ENCODE measurements at regions of chrX and their contacts with region 1.

Region 1: DNA sequence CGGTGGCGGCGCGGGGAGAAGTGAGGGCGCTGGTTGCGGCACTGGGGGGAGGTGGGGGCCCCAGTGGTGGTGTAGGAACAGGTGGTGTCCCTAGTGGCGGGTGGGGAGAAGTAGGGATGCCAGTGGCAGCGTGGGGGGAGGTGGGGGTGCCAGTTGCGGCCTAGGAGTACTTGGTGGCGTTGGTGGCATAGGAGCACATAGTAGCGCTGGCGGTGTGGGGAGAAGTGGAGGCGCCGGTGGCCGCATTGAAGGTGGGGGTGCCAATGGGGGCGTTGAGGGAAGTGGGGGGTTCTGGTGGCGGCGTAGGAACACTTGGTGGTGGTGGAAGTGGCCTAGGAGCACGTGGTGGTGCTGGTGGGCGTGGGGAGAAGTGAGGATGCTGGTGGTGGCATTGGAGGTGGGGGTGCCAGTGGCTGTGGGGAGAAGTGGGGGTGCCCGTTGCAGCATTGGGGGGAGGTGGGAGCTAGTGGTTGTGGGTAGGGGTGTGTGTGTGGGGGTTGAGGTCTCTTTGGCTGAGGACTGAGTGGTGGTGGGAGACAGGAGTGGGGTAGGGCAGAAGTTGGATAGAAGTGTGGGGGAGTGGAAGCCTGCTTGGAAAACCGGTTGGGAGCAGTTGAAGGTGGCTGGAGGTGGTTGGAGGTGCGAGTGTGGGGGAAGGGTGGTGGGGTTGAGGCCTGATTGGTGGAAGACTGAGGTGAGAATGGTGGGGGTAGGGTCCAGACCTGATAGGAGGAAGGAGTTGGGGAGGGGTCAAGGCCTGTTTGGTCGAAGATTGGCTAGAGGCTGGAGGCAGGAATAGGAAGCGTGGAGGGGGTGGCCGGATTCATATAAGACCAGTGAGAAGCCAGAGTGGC is 1.1 kb downstream of the GCNA start:
- DNase-seq: no peak
- H3K4me3 ChIP-seq: no peak overlapping the region
- H3K27me3 ChIP-seq: no peaks in the 10 kb centered on the region
- CTCF ChIP-seq: no peak

Region 2: DNA sequence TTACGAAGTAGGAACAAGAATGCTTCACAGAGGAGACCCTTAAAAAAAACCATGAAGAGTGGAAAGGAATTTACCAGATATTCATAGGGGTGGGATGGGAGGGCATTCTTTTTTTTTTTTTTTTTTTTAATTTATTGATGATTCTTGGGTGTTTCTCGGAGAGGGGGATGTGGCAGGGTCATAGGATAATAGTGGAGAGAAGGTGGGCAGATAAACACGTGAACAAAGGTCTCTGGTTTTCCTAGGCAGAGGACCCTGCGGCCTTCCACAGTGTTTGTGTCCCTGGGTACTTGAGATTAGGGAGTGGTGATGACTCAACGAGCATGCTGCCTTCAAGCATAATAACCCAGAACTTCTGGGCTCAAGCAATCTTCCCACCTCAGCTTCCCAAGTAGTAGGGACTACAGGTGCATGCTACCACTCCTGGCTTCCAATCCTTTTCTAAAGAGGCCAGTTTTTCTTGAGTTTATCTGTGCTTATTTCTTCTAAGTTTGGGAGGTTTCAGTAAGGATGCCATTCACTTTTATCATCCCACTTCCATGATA is 112.3 kb before region 1 on chrX:
- CTCF ChIA-PET with region 1: no interaction called
- POLR2A ChIA-PET with region 1: no interaction called
- DNase-seq: no peak
- H3K4me3 ChIP-seq: no peak overlapping the region
- H3K27me3 ChIP-seq: no peaks in the 10 kb centered on the region
- CTCF ChIP-seq: no peak

Region 3: GRCh38 chrX:71482228-71482958 is 97.0 kb before region 1 on chrX:
- CTCF ChIA-PET with region 1: no interaction called
- POLR2A ChIA-PET with region 1: no interaction called
- DNase-seq: no peak
- H3K4me3 ChIP-seq: no peak overlapping the region
- H3K27me3 ChIP-seq: no peaks in the 10 kb centered on the region
- CTCF ChIP-seq: no peak

Region 4: GRCh38 chrX:71532753-71533425 is 46.5 kb before region 1 on chrX and contains the start of gene OGT:
- CTCF ChIA-PET with region 1: no interaction called
- POLR2A ChIA-PET with region 1: interaction called, 10 read pairs
- DNase-seq: peak; percentile 75
- H3K4me3 ChIP-seq: peak within 1 kb of the TSS; percentile 59
- H3K27me3 ChIP-seq: no peaks in the 10 kb centered on the region
- CTCF ChIP-seq: no peak
- polyA plus RNA-seq, gene OGT: 280 and 330 TPM in 2 replicates